Heart left ventricle (tissue), 16 donors: ENCODE measurements at regions of chr11 and their contacts with region 1.

Region 1: GRCh38 chr11:56988614-56989013 is at the start of gene OR5AK2:
- DNase-seq: no peak
- ATAC-seq: no peak
- H3K4me3 ChIP-seq: no peak within 1 kb of the TSS
- H3K27ac ChIP-seq: no peak within 1 kb of the TSS
- H3K4me1 ChIP-seq: no peaks in the 10 kb centered on the region
- H3K27me3 ChIP-seq: no peaks in the 10 kb centered on the region
- CTCF ChIP-seq: no peak
- POLR2A ChIP-seq: no peak
- total RNA-seq, gene OR5AK2: not detected

Region 2: GRCh38 chr11:56817661-56818060 is 171.0 kb before region 1 on chr11:
- intact Hi-C with region 1: no loop called
- DNase-seq: no peak
- ATAC-seq: no peak
- H3K4me3 ChIP-seq: no peak overlapping the region
- H3K27ac ChIP-seq: no peak overlapping the region
- H3K4me1 ChIP-seq: no peaks in the 10 kb centered on the region
- H3K27me3 ChIP-seq: peaks cover 0 to 3% (median 0%) of the 10 kb centered on the region in 9 donors
- CTCF ChIP-seq: no peak
- POLR2A ChIP-seq: no peak

Region 3: GRCh38 chr11:57049749-57050148 is 61.1 kb after region 1 on chr11:
- intact Hi-C with region 1: loop called in 2 of 10 experiments (anchors 10 kb)
- DNase-seq: no peak
- ATAC-seq: no peak
- H3K4me3 ChIP-seq: no peak overlapping the region
- H3K27ac ChIP-seq: no peak overlapping the region
- H3K4me1 ChIP-seq: no peaks in the 10 kb centered on the region
- H3K27me3 ChIP-seq: no peaks in the 10 kb centered on the region
- CTCF ChIP-seq: no peak
- POLR2A ChIP-seq: no peak

Region 4: DNA sequence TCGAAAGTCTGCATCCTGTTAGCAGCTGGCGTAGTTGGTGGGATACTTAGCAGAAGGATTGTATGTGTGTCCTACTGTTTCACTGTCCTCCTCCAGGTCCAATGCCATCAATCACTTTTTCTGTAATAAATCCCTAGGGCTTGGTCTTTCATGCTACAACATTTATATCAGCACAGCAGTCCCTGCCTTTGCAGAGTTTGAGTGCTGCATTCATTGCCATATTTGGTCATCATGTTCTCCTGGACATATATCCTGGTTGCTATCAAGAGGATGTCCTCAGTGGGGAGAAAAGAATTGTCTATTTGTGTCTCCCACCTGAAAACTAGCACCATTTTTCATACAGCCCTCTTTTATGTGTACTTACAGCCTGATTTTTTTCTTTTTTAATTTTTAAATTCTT is 67.2 kb after region 1 on chr11:
- intact Hi-C with region 1: loop called in 1 of 10 experiments (anchors 10 kb)
- DNase-seq: no peak
- ATAC-seq: no peak
- H3K4me3 ChIP-seq: no peak overlapping the region
- H3K27ac ChIP-seq: no peak overlapping the region
- H3K4me1 ChIP-seq: no peaks in the 10 kb centered on the region
- H3K27me3 ChIP-seq: no peaks in the 10 kb centered on the region
- CTCF ChIP-seq: no peak
- POLR2A ChIP-seq: no peak

Region 5: DNA sequence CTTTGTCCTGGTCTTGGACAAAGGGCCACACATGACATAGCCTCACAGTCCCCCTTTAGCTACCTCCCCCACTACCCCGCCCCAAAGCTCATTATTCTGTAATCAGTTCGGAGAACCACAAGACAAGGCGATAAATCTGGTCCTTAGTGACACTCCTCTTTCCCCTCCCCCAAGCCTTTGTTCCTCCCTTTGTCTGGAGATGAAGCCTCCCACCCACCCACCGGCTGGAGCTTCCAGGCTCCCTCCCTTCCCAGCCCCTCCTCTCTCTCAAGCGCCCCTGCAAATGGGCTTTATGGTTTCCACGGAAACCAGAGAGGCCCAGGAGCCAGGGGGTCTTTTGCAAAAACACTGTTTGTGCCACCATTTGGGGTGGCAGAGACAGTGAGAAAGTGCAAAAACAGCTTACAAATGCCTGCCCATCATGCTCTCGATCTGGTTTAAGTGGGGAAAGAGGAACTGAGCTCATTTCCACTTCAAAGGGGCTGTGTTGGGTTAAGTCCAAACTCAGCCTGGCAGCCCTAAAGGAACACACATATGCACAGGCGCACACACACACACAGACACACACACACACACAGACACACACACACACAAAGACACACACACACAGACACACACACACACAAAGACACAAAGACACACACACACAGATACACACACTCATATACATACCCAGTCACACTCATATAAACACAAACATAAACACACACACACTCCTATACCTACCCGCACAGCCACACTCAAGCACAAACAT is 224.9 kb after region 1 on chr11:
- intact Hi-C with region 1: no loop called
- DNase-seq: peak in 1 of 5 donors; percentile 38
- ATAC-seq: peak in 3 of 4 donors; percentile 48 to 56 (median 51)
- H3K4me3 ChIP-seq: peak overlapping the region in 2 of 12 donors; percentile 7 to 8
- H3K27ac ChIP-seq: peak overlapping the region in 10 of 12 donors; percentile 41 to 75 (median 66)
- H3K4me1 ChIP-seq: peaks cover 0 to 70% (median 39%) of the 10 kb centered on the region in 12 donors
- H3K27me3 ChIP-seq: no peaks in the 10 kb centered on the region
- CTCF ChIP-seq: no peak
- POLR2A ChIP-seq: no peak